AG04449 (cell line): ENCODE measurements at regions of chr6 and their contacts with region 1.

Region 1: DNA sequence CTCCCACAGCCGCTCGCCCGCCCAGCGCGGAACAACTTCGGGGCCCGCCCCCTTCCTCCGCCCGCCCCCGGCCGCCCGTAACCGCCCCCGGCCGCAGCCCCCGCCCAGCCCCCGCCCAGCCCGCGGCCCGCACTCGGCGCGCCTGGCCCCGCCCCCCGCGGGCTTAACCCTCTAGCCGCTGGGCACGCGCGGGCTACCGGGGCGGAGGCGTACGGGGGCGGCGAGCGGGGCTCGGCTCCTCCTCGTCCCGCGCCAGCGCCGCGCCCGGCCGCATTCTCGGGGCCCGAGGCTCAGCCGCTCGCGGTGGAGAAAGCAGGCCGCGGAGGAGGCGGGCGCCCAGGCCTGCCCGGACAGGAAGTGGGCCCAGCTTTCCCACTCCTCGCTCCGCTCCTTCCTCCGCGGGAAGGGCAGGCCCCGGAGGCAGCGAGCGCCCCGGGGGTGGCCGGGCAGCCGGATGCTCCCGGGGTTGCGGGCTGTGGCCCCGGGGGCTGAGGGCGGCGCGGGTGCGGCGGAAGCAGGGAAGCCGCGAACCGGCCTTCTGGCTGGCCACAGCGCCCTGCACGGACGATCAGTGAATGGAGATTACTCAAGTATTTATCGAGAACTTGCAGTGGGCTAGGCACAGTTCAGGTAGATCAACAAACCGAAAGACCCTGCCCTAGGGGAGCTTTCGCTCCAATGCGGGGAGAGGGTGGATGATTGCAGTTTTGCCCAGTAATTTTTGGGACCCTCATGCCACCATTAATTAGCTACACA is at the start of gene TRAM2:
- DNase-seq: no peak
- H3K4me3 ChIP-seq: peak within 1 kb of the TSS; percentile 95
- CTCF ChIP-seq: no peak

Region 2: GRCh38 chr6:52475307-52475706 is 101.9 kb before region 1 on chr6:
- CTCF ChIA-PET with region 1: no interaction called
- POLR2A ChIA-PET with region 1: no interaction called
- DNase-seq: no peak
- H3K4me3 ChIP-seq: no peak overlapping the region
- CTCF ChIP-seq: no peak

Region 3: DNA sequence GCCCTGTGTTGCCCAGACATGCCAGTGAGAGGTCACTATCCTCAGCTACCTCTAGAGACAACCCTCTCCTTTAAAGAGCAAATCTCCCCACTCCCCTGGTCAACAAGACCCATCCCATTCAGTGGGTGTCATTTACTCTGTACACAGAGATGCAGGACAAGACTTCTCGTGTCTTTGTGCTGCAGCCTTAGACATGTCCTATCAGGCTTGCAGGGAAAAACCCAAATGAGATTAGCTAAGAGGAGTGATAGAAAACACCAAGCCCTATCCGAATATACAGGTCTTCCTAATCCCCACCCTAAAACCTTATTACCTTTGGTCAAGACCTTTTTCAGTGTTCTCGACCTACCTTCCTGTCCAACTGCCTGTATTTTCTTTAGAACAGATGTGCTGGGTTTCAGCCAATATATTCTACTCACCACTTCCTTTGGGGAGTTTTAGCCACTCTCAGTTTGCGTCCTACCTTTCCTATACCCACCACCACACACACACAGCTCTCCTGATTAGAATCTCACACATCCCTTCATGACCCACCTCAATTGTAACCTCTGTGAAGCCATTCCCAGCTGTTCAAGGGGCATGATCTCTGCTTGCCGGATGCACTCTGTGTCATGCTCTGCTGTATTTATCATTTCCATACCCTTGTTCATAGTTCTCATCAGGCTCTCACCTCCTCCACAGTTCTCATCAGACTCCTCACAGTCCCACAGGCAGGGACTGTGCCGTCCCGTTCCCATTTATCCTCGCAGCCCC is 40.0 kb before region 1 on chr6:
- CTCF ChIA-PET with region 1: interaction called, 28 read pairs
- POLR2A ChIA-PET with region 1: interaction called, 6 read pairs
- DNase-seq: no peak
- H3K4me3 ChIP-seq: no peak overlapping the region
- CTCF ChIP-seq: no peak

Region 4: GRCh38 chr6:52543729-52544601 is 33.2 kb before region 1 on chr6:
- CTCF ChIA-PET with region 1: interaction called, 28 read pairs
- POLR2A ChIA-PET with region 1: interaction called, 6 read pairs
- DNase-seq: no peak
- H3K4me3 ChIP-seq: no peak overlapping the region
- CTCF ChIP-seq: no peak

Region 5: DNA sequence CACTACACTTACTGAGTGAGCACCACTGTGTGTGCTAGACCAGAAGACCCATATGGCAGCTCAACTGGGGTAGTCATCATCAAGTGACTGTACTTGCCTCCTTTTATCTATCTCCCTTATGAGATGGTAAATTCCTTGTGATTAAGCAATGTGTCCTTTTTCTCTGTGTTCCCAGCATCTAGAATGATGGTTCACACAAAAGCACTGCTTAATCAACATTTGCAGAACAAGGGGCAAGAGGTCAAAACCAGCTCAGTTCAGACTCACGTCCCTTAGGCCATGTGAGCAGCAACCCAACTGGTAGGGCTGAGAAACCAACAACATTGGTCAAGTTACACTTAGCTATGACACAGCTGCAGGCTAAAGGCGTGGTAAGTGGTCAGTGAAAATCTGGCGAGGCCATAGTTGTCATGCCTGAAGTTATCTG is 10.3 kb before region 1 on chr6:
- CTCF ChIA-PET with region 1: interaction called, 16 read pairs
- POLR2A ChIA-PET with region 1: interaction called, 12 read pairs
- DNase-seq: peak; percentile 90
- H3K4me3 ChIP-seq: no peak overlapping the region
- CTCF ChIP-seq: no peak

Region 6: DNA sequence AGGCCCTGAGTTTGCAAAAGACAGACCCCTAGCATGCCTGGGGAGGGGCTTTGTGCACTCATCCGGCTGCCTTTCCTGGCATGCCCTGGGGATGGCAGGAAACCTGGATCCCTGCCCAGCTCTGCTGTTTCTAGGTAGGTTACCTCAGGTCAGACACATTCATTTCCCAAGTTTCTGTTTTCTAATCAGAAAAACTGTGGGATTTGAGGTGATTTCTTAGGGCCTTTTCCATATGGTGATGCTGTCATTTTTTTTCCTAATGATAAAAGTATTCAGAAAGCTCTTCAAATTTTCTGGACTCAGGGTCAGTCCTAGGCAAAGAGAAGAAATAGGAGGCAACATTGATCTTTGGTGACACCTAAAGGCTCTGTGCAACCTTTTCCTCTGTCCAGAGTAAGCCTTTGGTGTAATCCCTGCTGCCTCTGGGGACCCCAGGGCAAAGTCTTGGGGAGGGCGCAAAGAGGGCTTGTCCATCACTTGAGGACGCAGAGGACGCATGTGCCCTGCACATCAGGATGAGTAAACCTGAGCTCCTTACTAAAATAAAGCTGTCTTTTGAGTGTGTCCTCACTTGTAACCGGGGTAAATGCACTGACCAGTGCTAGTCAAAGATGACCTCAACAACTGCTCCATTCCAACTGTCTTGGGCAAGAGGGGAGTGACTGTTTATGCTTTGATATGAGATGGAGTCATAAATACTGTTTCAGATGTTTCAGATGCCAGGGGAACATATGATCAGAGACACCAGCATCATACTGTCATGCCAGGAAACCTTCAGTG is 13.1 kb after region 1 on chr6:
- CTCF ChIA-PET with region 1: interaction called, 60 read pairs
- POLR2A ChIA-PET with region 1: interaction called, 36 read pairs
- DNase-seq: no peak
- H3K4me3 ChIP-seq: no peak overlapping the region
- CTCF ChIP-seq: no peak

Region 7: GRCh38 chr6:52598123-52598823 is 21.1 kb after region 1 on chr6:
- CTCF ChIA-PET with region 1: interaction called, 60 read pairs
- POLR2A ChIA-PET with region 1: interaction called, 36 read pairs
- DNase-seq: no peak
- H3K4me3 ChIP-seq: no peak overlapping the region
- CTCF ChIP-seq: peak; percentile 82